Panc1 (cell line): ENCODE measurements at regions of chr6 and their contacts with region 1.

Region 1: DNA sequence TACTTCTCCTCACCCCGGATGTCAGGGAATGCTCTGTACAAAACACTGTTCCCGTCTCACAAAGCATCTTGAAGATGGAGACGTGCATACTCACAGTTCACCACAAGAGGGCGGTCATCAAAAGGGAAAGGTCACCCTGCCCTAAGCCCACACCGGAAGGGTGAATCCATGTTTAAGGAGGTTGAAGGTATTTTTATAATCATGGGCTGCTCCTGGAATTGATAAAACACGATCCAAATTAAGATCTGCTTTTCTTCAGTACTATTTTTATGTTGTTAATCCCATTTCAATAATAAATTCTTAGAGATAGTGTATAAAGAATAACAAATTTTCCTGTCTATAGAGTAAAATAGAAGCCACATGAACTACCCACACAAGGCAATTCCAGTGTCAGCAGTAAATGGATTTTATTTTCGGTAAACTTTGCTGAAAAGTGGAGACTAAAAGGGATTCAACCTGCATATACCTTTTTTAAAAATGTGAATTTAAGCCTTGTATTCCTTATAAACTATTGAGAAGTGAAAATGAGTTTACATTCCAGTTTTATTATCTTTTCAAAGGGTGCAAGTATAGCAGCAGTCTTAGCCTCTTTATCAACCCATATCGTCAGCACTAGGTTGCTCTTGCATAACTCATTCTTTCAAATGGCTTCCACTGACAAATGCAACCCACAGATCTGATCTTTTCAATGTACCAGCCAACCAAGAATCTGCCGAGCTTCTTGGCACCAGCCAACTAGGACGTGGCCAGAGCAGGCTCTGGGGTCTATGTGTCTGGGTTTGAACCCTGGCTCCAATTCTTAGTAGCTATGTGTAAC is 79.7 kb upstream of the MBOAT1 start:
- DNase-seq: peak; percentile 85
- ATAC-seq: peak; percentile 99
- H3K4me3 ChIP-seq: no peak overlapping the region
- H3K27ac ChIP-seq: no peak overlapping the region
- H3K4me1 ChIP-seq: no peaks in the 10 kb centered on the region
- H3K27me3 ChIP-seq: no peaks in the 10 kb centered on the region
- CTCF ChIP-seq: peak; percentile 91

Region 2: DNA sequence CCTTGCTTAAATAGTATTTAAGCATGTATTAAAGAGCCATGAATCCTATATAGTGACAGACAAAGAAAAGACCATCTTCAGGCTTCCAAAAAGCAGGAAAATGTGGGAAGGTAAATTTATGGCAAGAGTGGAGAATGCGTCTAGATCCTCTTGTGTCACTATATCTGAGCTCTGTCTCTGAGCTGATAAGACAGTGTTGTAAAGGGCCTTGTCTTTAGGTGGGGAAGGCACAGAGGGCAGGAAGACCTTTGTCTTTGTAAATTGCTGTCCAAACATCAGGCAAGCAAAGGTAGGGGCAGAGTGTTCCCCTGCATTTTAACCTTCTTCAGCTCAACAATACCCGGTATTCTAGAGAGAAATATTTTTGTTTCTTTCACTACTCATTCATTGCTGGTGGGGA is 45.8 kb before region 1 on chr6:
- CTCF ChIA-PET with region 1: no interaction called
- POLR2A ChIA-PET with region 1: no interaction called
- in situ Hi-C with region 1: no loop called
- intact Hi-C with region 1: no loop called
- DNase-seq: no peak
- ATAC-seq: no peak
- H3K4me3 ChIP-seq: no peak overlapping the region
- H3K27ac ChIP-seq: no peak overlapping the region
- H3K4me1 ChIP-seq: no peaks in the 10 kb centered on the region
- H3K27me3 ChIP-seq: no peaks in the 10 kb centered on the region
- CTCF ChIP-seq: no peak

Region 3: DNA sequence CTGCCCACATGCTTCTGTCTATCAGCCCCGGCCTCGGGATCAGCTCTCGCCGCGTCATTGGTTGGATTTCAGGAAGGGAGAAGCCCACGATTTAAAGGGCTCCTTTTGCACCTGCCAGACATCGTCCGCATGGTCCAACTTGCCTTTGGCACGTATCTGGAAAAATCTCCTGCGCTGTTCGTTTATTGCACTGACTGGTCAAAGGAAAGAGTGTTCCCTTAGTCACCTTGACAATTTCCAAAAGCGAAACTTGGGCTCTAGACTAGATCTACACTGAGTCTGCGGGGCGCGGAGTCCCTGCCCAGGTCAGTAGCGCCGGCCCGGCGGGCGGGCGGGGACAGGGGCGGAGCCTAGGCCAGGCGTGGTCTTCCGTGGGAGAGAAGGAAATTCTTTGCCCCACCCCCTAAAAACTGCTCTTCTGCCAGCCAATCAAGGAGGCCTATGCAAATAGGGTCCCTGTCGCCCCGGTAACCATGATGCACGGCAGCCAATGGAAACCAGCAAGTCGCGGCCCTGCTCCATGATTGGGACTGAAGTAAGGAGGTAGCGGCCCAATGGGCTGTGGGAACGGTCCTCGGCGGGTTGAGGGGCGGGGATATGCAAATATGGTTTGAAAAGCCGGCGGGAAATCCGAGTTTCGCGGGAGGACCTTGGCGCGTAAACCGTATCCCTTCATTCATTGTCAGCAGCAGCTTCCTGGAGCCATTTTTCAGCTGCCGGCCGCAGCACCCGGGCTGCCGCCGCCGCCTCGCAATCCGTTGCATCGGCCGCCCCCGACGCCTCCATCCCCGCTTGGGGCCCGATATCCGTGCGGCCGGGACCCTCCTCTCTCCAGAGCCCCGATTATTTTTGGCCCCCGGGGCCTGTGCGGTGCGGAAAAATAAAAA is 109.5 kb after region 1 on chr6 and contains the start of gene E2F3:
- CTCF ChIA-PET with region 1: no interaction called
- POLR2A ChIA-PET with region 1: no interaction called
- in situ Hi-C with region 1: no loop called
- intact Hi-C with region 1: loop called (anchors 5 kb)
- DNase-seq: peak; percentile 97
- ATAC-seq: peak; percentile 88
- H3K4me3 ChIP-seq: peak within 1 kb of the TSS; percentile 94 to 97
- H3K27ac ChIP-seq: peak within 1 kb of the TSS; percentile 88
- H3K4me1 ChIP-seq: peaks cover 7% of the 10 kb centered on the region; the same call in 1 of the 2 replicates
- H3K27me3 ChIP-seq: no peaks in the 10 kb centered on the region
- CTCF ChIP-seq: no peak
- total RNA-seq, gene E2F3: 31.0 TPM

Region 4: GRCh38 chr6:20438462-20439070 is 146.6 kb after region 1 on chr6:
- CTCF ChIA-PET with region 1: no interaction called
- POLR2A ChIA-PET with region 1: no interaction called
- in situ Hi-C with region 1: no loop called
- intact Hi-C with region 1: no loop called
- DNase-seq: no peak
- ATAC-seq: no peak
- H3K4me3 ChIP-seq: no peak overlapping the region
- H3K27ac ChIP-seq: no peak overlapping the region
- H3K4me1 ChIP-seq: no peaks in the 10 kb centered on the region
- H3K27me3 ChIP-seq: no peaks in the 10 kb centered on the region
- CTCF ChIP-seq: no peak

Region 5: DNA sequence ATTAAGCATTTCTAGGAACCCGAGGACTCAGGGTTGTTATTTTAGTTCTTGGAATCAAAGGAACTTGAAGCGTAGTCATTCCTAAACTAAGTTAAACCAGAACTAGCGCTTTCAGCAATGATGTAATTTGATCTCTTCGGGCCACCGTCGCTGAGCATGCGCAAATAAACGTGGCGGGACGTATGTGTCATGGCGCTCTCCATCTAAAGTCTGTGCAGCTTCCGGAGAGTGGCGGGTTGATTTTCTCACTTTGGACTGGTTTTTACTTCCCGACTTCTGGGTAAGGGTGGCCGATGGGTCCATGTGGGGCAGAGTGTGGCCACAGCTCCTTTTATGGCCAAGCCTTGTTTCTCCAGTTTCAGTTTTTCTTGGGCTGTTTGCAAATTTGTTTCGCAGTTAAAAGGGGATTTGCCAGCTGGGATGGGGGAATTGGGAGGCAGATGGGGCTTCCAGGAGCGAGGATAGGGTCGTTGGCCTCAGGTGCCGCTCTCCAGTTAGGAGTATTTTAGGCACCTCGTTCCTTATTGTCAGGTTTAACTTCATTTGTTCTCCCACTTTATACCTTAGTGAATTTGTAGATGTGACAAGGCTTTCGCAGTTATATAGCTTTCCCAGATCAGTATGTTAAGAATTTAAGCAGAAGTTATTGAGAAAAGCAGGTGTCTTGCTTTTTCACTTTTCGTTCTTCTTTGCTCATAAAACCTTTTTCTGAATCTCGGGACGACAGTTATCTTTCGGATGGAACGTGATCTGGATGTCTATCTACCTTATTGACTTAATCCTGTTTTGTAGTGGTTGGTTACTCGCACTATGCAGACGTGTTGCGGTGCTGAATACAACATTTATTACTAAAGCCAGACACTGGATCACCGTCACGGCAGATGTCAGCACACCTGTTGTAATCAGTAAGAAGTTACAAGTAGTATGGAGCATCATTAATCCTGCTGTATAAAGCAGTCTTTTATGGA is 242.6 kb after region 1 on chr6 and contains the start of gene CDKAL1:
- CTCF ChIA-PET with region 1: no interaction called
- POLR2A ChIA-PET with region 1: no interaction called
- in situ Hi-C with region 1: no loop called
- intact Hi-C with region 1: loop called (anchors 1 kb)
- DNase-seq: peak; percentile 73
- ATAC-seq: peak; percentile 94
- H3K4me3 ChIP-seq: peak within 1 kb of the TSS; percentile 94 to 95
- H3K27ac ChIP-seq: peak within 1 kb of the TSS; percentile 95
- H3K4me1 ChIP-seq: peaks cover 8% of the 10 kb centered on the region
- H3K27me3 ChIP-seq: no peaks in the 10 kb centered on the region
- CTCF ChIP-seq: no peak
- total RNA-seq, gene CDKAL1: 14.5 TPM